Naive thymus-derived CD8-positive, alpha-beta T cell (primary cell): ENCODE measurements at regions of chr19 and their contacts with region 1.

Region 1: GRCh38 chr19:38869856-38870607 is 8.0 kb downstream of the RINL start:
- DNase-seq: peak; percentile 91 to 97 (median 94)
- ATAC-seq: peak; percentile 94 to 95
- H3K4me3 Mint-ChIP-seq: peak overlapping the region; percentile 85 to 98 (median 92)
- H3K27ac Mint-ChIP-seq: peak overlapping the region; percentile 83 to 97 (median 92)
- H3K4me1 Mint-ChIP-seq: peaks cover 21 to 60% (median 55%) of the 10 kb centered on the region in 4 donors
- H3K27me3 Mint-ChIP-seq: no peaks in the 10 kb centered on the region

Region 2: GRCh38 chr19:38769635-38770211 is 100.3 kb before region 1 on chr19:
- POLR2A ChIA-PET with region 1: interaction called, 10 read pairs
- DNase-seq: peak; percentile 75 to 96 (median 89)
- ATAC-seq: peak; percentile 84 to 85
- H3K4me3 Mint-ChIP-seq: peak overlapping the region; percentile 28 to 78 (median 58)
- H3K27ac Mint-ChIP-seq: peak overlapping the region; percentile 37 to 91 (median 84)
- H3K4me1 Mint-ChIP-seq: peaks cover 3 to 9% (median 7%) of the 10 kb centered on the region in 4 donors
- H3K27me3 Mint-ChIP-seq: no peaks in the 10 kb centered on the region

Region 3: DNA sequence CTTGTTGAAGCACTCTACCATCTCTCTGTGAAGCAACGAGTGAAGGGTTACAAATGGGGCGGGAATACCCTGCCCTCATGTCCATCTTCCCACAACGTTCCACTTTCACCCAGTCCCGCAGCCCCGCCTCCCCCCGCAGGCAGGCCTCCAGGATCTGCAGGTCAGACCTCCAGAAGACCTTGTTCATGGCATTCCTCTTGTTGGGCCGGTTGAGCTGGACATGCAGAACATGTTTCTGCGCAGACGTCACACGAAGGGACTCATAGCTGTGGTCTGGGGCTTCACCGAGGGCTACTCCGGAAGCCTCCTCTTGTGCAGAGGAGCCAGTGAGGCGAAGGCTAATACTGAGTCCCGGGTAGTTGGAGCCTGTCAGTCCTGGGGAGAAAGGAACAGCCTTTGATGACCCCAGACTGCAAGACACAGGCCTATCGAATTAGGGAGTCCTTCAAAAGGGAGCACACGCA is 38.9 kb before region 1 on chr19:
- POLR2A ChIA-PET with region 1: interaction called, 10 read pairs
- DNase-seq: peak in 1 of 10 donors; percentile 13
- ATAC-seq: no peak
- H3K4me3 Mint-ChIP-seq: peak overlapping the region; percentile 90 to 97 (median 94)
- H3K27ac Mint-ChIP-seq: peak overlapping the region; percentile 87 to 99 (median 96)
- H3K4me1 Mint-ChIP-seq: peaks cover 9 to 53% (median 44%) of the 10 kb centered on the region in 4 donors
- H3K27me3 Mint-ChIP-seq: no peaks in the 10 kb centered on the region

Region 4: DNA sequence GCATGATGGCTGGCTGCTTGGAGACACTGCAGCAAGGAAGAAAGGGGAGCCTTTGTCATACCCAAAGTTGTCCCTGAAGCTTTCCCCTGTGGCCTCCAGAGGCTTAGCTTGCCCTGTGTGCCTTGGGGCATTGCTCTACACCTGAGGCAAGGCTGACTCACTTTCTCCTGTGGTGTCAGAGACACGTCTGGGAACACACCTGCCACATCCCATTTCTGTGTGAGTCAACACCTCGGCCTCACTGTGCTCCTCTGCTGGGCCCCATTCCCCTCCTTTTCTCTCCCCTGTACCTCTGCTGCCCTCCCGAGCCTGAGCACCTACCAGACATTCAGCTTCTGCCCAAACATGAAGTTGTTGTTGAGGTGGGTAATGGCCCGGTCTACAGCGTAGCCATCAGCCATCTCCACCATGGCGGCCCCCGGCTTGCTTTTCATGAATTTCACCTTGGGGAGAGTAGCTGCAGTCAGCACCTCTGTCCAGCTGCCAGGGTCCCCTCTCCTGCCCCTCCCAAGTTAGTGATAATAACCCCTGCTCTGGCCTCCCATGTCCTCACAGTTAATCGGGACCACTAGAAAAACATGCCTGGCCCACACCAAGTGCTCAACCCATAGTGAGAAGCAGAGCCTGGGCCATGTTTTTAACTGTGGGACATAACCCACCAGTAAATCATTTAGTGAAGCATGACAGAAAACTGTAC is 31.3 kb before region 1 on chr19:
- POLR2A ChIA-PET with region 1: interaction called, 37 read pairs
- DNase-seq: no peak
- ATAC-seq: no peak
- H3K4me3 Mint-ChIP-seq: no peak overlapping the region
- H3K27ac Mint-ChIP-seq: peak overlapping the region in 8 of 10 donors; percentile 20 to 92 (median 54)
- H3K4me1 Mint-ChIP-seq: peaks cover 23 to 53% (median 50%) of the 10 kb centered on the region in 4 donors
- H3K27me3 Mint-ChIP-seq: peaks cover 0 to 5% (median 0%) of the 10 kb centered on the region in 5 donors

Region 5: GRCh38 chr19:38856813-38857212 is 13.2 kb before region 1 on chr19:
- POLR2A ChIA-PET with region 1: interaction called, 302 read pairs
- DNase-seq: no peak
- ATAC-seq: no peak
- H3K4me3 Mint-ChIP-seq: peak overlapping the region in 8 of 10 donors; percentile 48 to 86 (median 66)
- H3K27ac Mint-ChIP-seq: peak overlapping the region in 9 of 10 donors; percentile 31 to 92 (median 82)
- H3K4me1 Mint-ChIP-seq: peaks cover 10 to 52% (median 31%) of the 10 kb centered on the region in 4 donors
- H3K27me3 Mint-ChIP-seq: peaks cover 0 to 1% (median 0%) of the 10 kb centered on the region in 5 donors